Cardiac septum (tissue), 1 donor: ENCODE measurements at regions of chr3 and their contacts with region 1.

Region 1: GRCh38 chr3:3038201-3038991 is 71.8 kb downstream of the IL5RA start:
- DNase-seq: no peak

Region 2: DNA sequence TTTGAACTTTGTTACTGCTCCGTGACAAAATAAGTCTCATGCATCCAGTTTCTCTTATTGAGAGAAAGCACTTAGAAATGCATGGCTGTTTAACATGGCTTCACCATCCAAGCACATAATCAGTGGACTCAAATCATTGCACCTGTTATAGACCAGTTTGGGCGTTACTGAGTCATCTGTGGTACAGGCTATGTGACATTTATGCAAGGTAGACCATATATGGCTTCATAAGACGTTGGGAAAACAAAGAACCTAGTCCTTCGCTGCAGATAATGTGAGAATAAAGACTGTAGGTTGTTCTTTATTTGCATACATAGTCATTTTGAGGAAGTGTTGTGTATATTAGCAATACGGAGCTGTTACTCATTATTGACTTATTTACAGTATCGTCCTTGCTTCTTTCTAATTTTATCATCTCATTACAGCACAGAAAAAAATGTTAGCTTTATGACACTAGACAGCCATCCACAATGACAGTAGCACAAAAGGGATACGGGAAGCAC is 303.0 kb before region 1 on chr3:
- intact Hi-C with region 1: no loop called
- DNase-seq: no peak

Region 3: GRCh38 chr3:3172627-3173026 is 134.2 kb after region 1 on chr3:
- intact Hi-C with region 1: loop called (anchors 2 kb)
- DNase-seq: no peak